ENCODE measurements at regions of chr1 and their contacts with region 1.

Region 1: DNA sequence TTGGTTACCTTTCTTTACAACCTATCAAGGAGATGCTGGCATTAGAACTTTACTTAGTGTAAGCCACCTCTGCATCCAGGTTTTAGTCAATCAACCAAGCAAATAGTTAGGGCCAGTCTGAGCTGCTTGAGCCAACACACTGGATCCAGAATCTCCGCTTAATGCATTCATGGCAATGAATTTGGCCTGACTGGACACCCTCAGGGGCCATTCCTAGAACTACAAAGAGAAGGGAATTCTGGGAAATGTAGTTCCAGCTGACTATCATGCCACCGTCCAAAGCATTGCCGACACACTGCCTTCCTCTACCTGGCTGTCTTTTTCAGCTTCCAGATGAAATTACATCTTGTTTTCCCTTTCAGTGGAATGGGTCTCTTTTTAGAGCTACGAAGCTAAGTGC is 163.0 kb upstream of the IGSF21 start:
- DNase-seq: no peak
- H3K4me3 ChIP-seq: no peak overlapping the region
- H3K27ac ChIP-seq: no peak overlapping the region
- H3K4me1 ChIP-seq: peaks cover 0 to 6% (median 0%) of the 10 kb centered on the region in 4 experiments; a peak in 4 of 7 replicates
- H3K27me3 ChIP-seq: no peaks in the 10 kb centered on the region; a peak in 1 of 7 replicates
- CTCF ChIP-seq: no peak
- EP300 ChIP-seq: no peak
- POLR2A ChIP-seq: no peak
- RAD21 ChIP-seq: no peak

Region 2: GRCh38 chr1:17955302-17956285 is 11.0 kb after region 1 on chr1:
- CTCF ChIA-PET with region 1: interaction called, 10 read pairs
- POLR2A ChIA-PET with region 1: no interaction called
- DNase-seq: no peak
- H3K4me3 ChIP-seq: no peak overlapping the region
- H3K27ac ChIP-seq: no peak overlapping the region
- H3K4me1 ChIP-seq: peaks cover 3 to 10% (median 7%) of the 10 kb centered on the region in 4 experiments
- H3K27me3 ChIP-seq: no peaks in the 10 kb centered on the region; a peak in 2 of 7 replicates
- CTCF ChIP-seq: no peak
- EP300 ChIP-seq: no peak
- POLR2A ChIP-seq: no peak
- RAD21 ChIP-seq: no peak

Region 3: DNA sequence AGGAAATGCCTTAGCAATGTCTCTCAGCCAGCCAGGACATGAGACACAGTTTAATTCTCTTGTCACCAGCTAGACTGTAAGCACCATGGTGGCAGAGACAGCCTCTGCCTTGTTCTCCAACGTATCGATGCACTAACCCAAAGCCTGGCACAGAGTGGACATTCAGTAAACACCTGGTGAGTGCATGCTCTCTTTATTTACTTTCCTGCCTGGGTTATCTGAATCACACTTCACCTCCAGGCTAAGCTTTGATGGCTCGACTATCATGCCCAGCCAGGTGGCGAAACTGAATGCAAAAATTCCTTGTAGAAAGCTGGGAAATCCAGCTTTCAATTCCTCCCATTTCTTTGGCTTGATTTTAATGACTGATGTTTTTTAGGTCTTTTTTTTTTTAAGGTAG is 18.4 kb after region 1 on chr1:
- CTCF ChIA-PET with region 1: interaction called, 10 read pairs
- POLR2A ChIA-PET with region 1: no interaction called
- DNase-seq: no peak
- H3K4me3 ChIP-seq: no peak overlapping the region
- H3K27ac ChIP-seq: no peak overlapping the region
- H3K4me1 ChIP-seq: peaks cover 1 to 5% (median 4%) of the 10 kb centered on the region in 4 experiments; a peak in 6 of 7 replicates
- H3K27me3 ChIP-seq: peaks cover 0 to 4% (median 1%) of the 10 kb centered on the region in 4 experiments; a peak in 3 of 7 replicates
- CTCF ChIP-seq: no peak
- EP300 ChIP-seq: no peak
- POLR2A ChIP-seq: no peak
- RAD21 ChIP-seq: no peak